PC-9 (cell line): ENCODE measurements at regions of chr6 and their contacts with region 1.

Region 1: DNA sequence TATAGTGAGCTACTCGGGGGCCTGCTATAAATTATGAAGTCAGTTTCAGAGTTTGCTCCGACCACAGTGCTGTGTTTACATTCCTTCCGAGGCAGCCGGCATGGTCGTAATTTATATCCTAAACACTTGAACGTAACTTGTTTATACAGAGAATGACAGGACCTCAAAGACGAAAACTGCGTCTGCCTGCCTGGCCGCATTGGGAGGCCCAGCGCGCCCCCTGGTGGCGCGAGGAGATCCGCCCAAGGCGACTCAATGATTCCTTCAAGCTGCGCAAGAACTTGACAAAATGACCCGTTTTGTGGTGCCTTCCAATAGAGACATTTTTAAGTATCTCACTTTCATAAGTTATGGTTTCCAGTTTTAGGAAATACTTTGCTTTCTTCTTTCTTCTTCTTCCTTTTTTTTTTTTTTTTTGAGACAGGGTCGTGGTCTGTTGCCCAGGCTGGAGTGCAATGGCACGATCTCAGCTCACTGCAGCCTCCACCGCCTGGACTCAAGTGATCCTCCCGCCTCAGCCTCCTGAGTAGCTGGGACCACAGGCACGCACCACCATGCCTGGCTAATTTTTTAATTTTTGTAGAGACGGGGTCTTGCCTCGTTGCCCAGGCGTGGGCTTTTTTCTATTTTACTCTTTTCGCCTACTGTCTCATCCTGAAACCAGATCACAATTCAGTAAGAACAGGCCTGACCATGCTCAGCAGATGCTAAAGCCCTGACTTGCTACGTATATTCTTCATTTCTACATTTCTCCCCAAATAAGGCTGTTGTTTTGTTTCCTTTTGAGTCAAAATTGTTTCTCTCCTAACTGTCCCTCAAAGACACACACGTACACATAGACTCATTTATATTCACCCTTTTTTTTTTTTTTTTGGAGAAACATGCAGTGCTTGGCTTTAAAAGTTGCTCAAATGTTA is 7.8 kb downstream of the FOXF2 start:
- DNase-seq: peak; percentile 45 to 67
- H3K4me3 ChIP-seq: no peak overlapping the region
- H3K27ac ChIP-seq: no peak overlapping the region
- H3K4me1 ChIP-seq: 0 out of 2 replicates have a peak, but pooled peaks cover 4% of the 10 kb centered on the region
- H3K27me3 ChIP-seq: no peaks in the 10 kb centered on the region
- CTCF ChIP-seq: peak; percentile 88

Region 2: GRCh38 chr6:387293-387741 is 1009.9 kb before region 1 on chr6:
- CTCF ChIA-PET with region 1: interaction called, 18 read pairs
- POLR2A ChIA-PET with region 1: no interaction called
- intact Hi-C with region 1: no loop called
- DNase-seq: no peak
- H3K4me3 ChIP-seq: no peak overlapping the region
- H3K27ac ChIP-seq: no peak overlapping the region
- H3K4me1 ChIP-seq: no peaks in the 10 kb centered on the region
- H3K27me3 ChIP-seq: peaks cover 44% of the 10 kb centered on the region; the same call in 1 of the 2 replicates
- CTCF ChIP-seq: no peak

Region 3: GRCh38 chr6:593139-593906 is 803.9 kb before region 1 on chr6:
- CTCF ChIA-PET with region 1: no interaction called
- POLR2A ChIA-PET with region 1: no interaction called
- intact Hi-C with region 1: loop called (anchors 1 kb)
- DNase-seq: peak; percentile 31 to 48
- H3K4me3 ChIP-seq: no peak overlapping the region
- H3K27ac ChIP-seq: no peak overlapping the region
- H3K4me1 ChIP-seq: no peaks in the 10 kb centered on the region
- H3K27me3 ChIP-seq: no peaks in the 10 kb centered on the region
- CTCF ChIP-seq: peak; percentile 68

Region 4: DNA sequence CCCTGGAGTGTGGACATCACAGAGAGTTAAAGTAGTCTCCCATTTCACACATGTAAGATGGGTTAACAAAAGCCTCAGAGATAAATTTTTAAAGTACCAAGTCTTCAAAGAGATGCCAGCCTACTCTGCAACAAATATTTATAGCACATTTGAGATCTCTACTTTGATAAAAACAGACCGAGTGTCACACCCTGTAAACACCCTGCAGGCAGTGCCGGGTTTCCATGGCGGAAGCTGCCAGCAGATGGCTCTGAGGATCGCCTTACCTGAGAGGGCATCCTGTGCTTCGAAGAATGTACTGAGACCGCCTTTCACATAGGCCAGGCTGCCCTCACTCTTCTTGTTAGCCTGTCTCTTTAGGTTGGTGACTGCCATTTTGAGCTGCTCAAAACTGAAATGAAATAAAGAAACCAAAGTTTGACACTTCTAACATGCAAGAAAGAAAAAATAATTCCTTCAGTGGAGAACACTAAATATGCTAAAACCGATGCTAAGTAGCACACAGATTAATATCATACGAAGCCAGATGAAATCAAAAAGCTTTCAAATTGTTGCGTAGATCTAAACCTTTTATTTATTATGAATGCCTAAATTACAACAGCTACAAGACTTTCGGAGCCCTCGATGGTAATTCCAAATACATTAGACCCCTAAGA is 779.6 kb before region 1 on chr6:
- CTCF ChIA-PET with region 1: no interaction called
- POLR2A ChIA-PET with region 1: no interaction called
- intact Hi-C with region 1: loop called (anchors 5 kb)
- DNase-seq: peak in 1 of 2 experiments; percentile 52
- H3K4me3 ChIP-seq: no peak overlapping the region
- H3K27ac ChIP-seq: no peak overlapping the region
- H3K4me1 ChIP-seq: no peaks in the 10 kb centered on the region
- H3K27me3 ChIP-seq: no peaks in the 10 kb centered on the region
- CTCF ChIP-seq: no peak

Region 5: DNA sequence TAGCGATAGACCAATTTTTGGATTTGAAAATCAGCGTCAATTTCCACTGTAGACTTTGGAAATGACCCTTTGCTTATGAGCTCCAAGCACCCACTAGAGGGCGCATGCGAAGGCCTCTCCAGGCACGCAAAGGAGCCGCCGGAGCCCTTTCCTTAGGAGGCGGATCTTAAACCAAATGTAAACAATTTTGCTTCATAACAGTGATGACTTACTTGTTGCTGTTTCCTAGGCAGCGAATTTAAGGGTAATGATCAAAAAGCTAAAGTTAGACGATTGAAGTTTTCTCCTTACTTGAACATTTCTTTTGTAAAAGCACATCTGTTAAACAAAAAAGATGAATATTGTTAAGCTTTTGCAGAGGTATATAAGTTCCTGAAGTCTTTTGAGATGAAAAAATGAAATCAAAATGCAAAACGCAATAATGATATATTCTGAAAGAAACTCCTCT is 675.1 kb before region 1 on chr6:
- CTCF ChIA-PET with region 1: no interaction called
- POLR2A ChIA-PET with region 1: no interaction called
- intact Hi-C with region 1: loop called (anchors 2 kb)
- DNase-seq: peak; percentile 49 to 53
- H3K4me3 ChIP-seq: no peak overlapping the region
- H3K27ac ChIP-seq: no peak overlapping the region
- H3K4me1 ChIP-seq: no peaks in the 10 kb centered on the region
- H3K27me3 ChIP-seq: no peaks in the 10 kb centered on the region; the same call in 1 of the 2 replicates
- CTCF ChIP-seq: peak; percentile 81

Region 6: GRCh38 chr6:912871-913835 is 484.1 kb before region 1 on chr6:
- CTCF ChIA-PET with region 1: no interaction called
- POLR2A ChIA-PET with region 1: no interaction called
- intact Hi-C with region 1: loop called (anchors 1 kb)
- DNase-seq: peak; percentile 34 to 58
- H3K4me3 ChIP-seq: no peak overlapping the region
- H3K27ac ChIP-seq: no peak overlapping the region
- H3K4me1 ChIP-seq: peaks cover 7% of the 10 kb centered on the region
- H3K27me3 ChIP-seq: no peaks in the 10 kb centered on the region
- CTCF ChIP-seq: peak; percentile 49